Right ventricle myocardium superior (tissue), 1 donor: ENCODE measurements at regions of chr3 and their contacts with region 1.

Region 1: DNA sequence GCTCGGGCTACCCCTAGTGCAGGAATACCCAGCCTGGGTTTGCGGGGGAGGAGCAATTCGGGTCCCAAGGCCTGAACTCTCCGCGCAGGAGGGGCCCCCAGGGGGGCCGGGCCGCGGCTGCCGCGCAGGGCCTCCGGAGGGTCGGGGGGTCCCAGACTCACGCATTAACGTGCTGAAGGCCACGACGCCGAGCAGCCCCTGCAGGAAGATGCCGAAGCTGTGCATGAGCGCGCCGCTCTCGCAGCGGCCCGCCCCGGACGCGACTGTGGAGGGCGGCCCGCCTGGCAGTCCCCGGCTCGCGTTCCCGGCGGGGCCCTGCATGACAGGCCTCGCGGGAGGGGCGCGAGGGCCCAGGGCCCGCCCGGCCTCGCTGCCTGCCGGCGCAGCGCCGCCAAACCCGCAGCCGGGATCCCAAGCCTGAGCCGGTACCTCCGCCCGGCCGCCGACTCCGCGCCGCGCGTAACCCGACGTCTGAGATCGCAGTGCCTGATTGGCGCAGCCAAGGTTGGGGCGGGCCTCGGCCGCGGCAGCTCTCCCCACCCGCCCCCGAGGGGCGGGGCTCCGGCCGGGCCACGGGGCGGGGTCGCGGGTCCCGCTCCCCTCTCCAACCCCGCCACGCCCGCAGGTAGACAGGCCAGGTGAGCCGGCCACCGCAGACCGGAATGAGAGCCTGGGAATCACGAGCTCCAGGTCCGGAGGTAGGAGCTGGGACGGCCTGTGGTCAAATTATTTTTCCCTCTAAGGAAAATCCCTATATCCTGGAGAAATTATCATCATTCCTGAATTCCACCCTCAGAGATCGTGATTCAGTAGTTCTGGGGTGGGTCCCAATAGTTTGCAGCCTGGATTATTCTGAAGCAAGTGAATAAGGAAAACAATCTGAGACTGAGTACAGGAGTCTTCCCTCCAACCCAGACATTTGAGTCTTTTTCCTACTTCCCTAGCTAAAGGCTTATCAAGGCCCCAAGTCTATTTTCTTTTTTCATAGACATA is at the start of gene STIMATE:
- DNase-seq: peak; percentile 94
- ATAC-seq: peak; percentile 99
- total RNA-seq, gene STIMATE: 6.1 TPM

Region 2: GRCh38 chr3:52220380-52221026 is 676.9 kb before region 1 on chr3:
- intact Hi-C with region 1: no loop called
- DNase-seq: peak; percentile 91
- ATAC-seq: peak; percentile 78

Region 3: GRCh38 chr3:52770496-52771333 is 126.7 kb before region 1 on chr3 and contains the start of gene NEK4:
- intact Hi-C with region 1: loop called (anchors 5 kb)
- DNase-seq: peak; percentile 97
- ATAC-seq: peak; percentile 100
- total RNA-seq, gene NEK4: 19.5 TPM